ENCODE measurements at regions of chr11 and their contacts with region 1.

Region 1: GRCh38 chr11:64716473-64717267 is 6.3 kb downstream of the NRXN2 start:
- DNase-seq: peak; percentile 77
- H3K4me3 ChIP-seq: no peak overlapping the region
- H3K27ac ChIP-seq: peak overlapping the region in 1 of 2 experiments; percentile 71; a peak in 2 of 4 replicates
- H3K4me1 ChIP-seq: peaks cover 0 to 39% of the 10 kb centered on the region in 2 experiments; a peak in 1 of 4 replicates
- H3K27me3 ChIP-seq: peaks cover 13% of the 10 kb centered on the region
- CTCF ChIP-seq: no peak
- EP300 ChIP-seq: no peak
- RAD21 ChIP-seq: no peak

Region 2: GRCh38 chr11:64703048-64703447 is 13.6 kb before region 1 on chr11:
- CTCF ChIA-PET with region 1: interaction called, 13 read pairs
- POLR2A ChIA-PET with region 1: interaction called, 3 read pairs
- DNase-seq: no peak
- H3K4me3 ChIP-seq: no peak overlapping the region
- H3K27ac ChIP-seq: no peak overlapping the region
- H3K4me1 ChIP-seq: peaks cover 0 to 6% of the 10 kb centered on the region in 2 experiments; a peak in 2 of 4 replicates
- H3K27me3 ChIP-seq: peaks cover 17% of the 10 kb centered on the region; the same call in 1 of the 2 replicates
- CTCF ChIP-seq: no peak
- EP300 ChIP-seq: no peak
- RAD21 ChIP-seq: no peak

Region 3: GRCh38 chr11:64971421-64972233 is 255.0 kb after region 1 on chr11 and contains the start of gene MAJIN:
- CTCF ChIA-PET with region 1: no interaction called
- POLR2A ChIA-PET with region 1: no interaction called
- DNase-seq: no peak
- H3K4me3 ChIP-seq: no peak within 1 kb of the TSS
- H3K27ac ChIP-seq: no peak within 1 kb of the TSS
- H3K4me1 ChIP-seq: no peaks in the 10 kb centered on the region
- H3K27me3 ChIP-seq: no peaks in the 10 kb centered on the region
- CTCF ChIP-seq: no peak
- EP300 ChIP-seq: no peak
- RAD21 ChIP-seq: no peak
- polyA plus RNA-seq, gene MAJIN: not detected in 2 replicates

Measured in SK-N-SH (cell line).